OCI-LY7 (cell line): ENCODE measurements at regions of chr16 and their contacts with region 1.

Region 1: GRCh38 chr16:483341-484075 is 44.0 kb upstream of the CAPN15 start:
- DNase-seq: no peak
- H3K4me3 ChIP-seq: no peak overlapping the region
- H3K27ac ChIP-seq: no peak overlapping the region
- H3K4me1 ChIP-seq: no peaks in the 10 kb centered on the region
- CTCF ChIP-seq: no peak

Region 2: GRCh38 chr16:535446-536405 is 52.2 kb after region 1 on chr16:
- CTCF ChIA-PET with region 1: no interaction called
- POLR2A ChIA-PET with region 1: no interaction called
- intact Hi-C with region 1: no loop called
- DNase-seq: no peak
- H3K4me3 ChIP-seq: no peak overlapping the region
- H3K27ac ChIP-seq: no peak overlapping the region
- H3K4me1 ChIP-seq: no peaks in the 10 kb centered on the region
- CTCF ChIP-seq: no peak

Region 3: DNA sequence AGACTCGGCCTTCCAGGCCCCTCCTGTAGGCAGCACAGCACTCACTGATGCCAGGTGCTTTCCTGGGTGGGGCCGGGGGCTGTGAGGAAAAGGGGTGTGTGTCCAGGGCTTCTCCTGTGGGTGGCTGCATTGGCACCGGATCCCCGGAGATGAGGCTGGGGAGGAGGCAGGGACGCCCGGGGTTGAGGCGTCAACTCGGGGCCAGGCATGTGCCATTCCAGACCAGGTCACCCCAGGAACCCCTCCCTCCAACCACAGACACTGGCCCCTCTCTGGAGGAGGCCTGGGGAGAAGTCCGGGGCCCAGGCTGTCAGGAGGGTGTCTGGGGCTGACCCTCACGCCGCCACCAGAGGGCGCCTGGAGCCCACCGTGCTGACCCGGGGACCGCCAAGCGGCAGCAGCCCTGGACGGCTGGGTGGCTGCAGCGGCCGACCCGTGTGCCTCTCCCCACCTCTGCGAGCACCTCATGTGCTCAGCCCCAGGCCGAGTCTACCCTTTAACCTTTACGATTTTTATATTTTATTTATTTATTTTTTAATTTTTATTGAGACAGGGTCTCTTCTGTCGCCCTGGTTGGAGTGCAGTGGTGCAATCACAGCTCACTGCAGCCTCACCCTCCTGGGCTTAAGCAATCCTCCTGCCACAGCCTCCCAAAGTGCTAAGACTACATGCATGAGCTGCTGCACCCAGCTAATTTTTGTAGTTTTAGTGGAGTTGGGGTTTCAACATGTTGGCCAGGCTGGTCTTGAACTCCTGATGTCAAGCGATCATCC is 228.2 kb after region 1 on chr16:
- CTCF ChIA-PET with region 1: interaction called, 16 read pairs
- POLR2A ChIA-PET with region 1: no interaction called
- intact Hi-C with region 1: no loop called
- DNase-seq: peak; percentile 82
- H3K4me3 ChIP-seq: no peak overlapping the region
- H3K27ac ChIP-seq: no peak overlapping the region
- H3K4me1 ChIP-seq: peaks cover 17% of the 10 kb centered on the region
- CTCF ChIP-seq: peak; percentile 84